Right ventricle myocardium superior (tissue), 1 donor: ENCODE measurements at regions of chr20 and their contacts with region 1.

Region 1: DNA sequence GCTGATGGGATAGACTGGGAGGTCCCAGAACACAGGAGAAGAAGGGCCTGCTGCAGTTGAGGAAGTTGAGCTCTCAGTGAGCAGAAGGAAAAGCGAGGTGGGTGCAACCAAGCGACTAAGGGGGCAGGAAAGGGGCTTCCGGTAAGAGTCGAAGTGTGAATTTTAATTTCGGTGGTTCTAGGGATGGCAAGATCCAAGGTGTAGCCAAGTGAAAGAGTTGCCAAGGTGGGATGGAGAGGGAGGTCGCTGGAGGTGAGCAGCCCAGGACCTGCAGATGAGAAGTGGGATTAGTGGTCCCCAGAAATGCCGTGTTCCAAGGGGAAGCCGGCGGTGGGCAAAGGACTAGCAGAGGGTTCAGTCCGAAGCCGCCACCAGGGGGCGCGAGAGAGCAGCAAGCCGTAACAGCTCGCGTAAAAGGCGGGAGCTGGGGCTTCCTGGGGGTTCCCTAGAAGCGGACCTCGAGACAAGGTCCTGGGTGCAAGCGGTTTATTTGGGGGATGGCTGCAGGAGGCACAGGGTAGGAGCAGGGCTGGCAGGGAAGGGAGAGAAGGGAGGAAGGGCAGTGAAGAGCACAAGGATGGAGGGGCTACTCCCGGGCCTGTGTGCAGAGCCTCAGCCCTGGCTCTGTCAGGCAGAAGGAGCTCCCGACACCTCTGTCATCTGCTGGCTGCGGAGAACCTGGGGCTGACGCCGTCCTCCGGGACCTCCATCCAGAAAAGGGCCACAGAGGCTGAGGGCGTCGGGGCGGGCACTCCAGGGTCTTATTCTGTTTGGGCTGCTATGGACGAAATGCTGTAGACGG is 103.6 kb downstream of the PAX1 start:
- DNase-seq: peak; percentile 70
- ATAC-seq: peak; percentile 36

Region 2: GRCh38 chr20:21781446-21782075 is 27.5 kb before region 1 on chr20:
- intact Hi-C with region 1: no loop called
- DNase-seq: no peak
- ATAC-seq: no peak

Region 3: DNA sequence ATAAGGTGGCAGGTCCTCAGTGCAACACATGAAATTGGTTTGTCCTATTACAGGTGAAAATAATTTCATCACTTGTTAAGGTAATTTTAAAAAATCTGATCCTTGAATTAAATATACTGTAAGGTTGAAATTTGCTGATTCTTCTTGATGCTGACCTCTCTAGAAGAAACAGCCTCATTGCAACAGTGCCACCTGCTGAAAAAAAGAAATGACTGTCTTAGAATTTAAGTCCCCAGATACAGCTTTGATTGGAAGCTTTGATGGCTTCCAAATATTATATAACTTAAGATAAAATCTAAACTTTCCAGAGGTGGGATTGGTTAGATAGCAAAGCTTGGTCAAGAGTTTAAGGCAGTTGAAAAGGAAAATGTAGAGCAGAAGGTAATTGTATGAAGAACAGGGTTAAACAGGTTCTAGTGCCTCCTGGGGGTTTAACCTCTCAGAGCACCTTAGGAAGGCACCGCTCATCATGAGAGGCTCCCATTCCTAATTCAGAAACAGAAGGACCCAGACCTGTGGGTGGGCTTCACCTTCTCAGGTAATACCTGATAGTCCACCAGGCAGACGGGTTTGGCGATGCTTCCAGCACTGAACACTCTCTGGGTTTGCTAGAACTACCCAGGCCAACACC is 297.4 kb after region 1 on chr20:
- intact Hi-C with region 1: loop called (anchors 5 kb)
- DNase-seq: no peak
- ATAC-seq: no peak